HCT116 (cell line): ENCODE measurements at regions of chr20 and their contacts with region 1.

Region 1: GRCh38 chr20:33401184-33401920 is at the start of gene CDK5RAP1:
- DNase-seq: peak; percentile 88
- ATAC-seq: peak; percentile 90
- H3K4me3 ChIP-seq: peak within 1 kb of the TSS; percentile 90 to 99
- H3K27ac ChIP-seq: peak within 1 kb of the TSS; percentile 54
- H3K4me1 ChIP-seq: peaks cover 10 to 15% of the 10 kb centered on the region in 2 experiments
- H3K27me3 ChIP-seq: no peaks in the 10 kb centered on the region
- CTCF ChIP-seq: no peak
- POLR2A ChIP-seq: peak; percentile 52
- RAD21 ChIP-seq: no peak
- total RNA-seq, gene CDK5RAP1: 41.4 TPM

Region 2: DNA sequence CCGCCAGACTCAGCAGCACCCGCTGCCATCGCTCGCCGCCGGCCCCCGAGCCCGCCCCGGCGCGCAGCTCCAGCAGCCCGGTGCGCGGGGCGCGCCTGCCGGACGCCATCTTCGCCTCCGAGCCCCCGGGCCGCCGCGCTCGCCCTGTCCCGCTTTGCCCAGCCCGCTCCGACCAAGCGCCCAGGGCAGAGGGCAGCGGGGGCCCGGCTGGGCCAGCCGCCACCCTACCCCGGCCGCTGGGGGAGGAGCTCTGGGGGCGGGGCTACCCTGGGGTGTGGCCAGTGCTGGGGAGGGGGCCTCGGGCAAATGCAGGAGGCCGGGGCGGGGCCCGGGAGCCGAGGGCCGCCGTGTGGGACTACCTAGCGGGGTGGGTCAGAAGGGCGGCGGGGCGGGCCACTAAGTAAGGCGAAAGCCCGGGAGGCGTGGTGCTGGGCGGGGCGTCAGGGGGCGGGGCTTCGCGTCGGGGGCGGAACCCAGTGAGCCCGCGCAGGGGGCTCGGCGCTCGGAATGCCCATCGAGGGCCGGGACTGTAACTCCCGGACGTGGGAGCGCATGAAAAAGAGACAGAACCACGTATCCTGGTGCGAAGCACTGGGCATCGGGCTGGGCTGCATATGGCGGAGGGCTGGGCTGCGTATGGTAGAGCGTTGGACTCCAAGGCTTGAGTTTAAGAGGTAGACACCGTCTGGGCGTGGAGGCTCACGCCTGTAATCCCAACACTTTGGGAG is 42.3 kb after region 1 on chr20 and contains the start of gene SNTA1:
- CTCF ChIA-PET with region 1: interaction called, 5 read pairs
- POLR2A ChIA-PET with region 1: interaction called, 5 read pairs
- RAD21 ChIA-PET with region 1: interaction called in 1 of 2 experiments, 3 read pairs
- intact Hi-C with region 1: loop called (anchors 2 kb)
- DNase-seq: no peak
- ATAC-seq: peak; percentile 91
- H3K4me3 ChIP-seq: peak within 1 kb of the TSS; percentile 57 to 69
- H3K27ac ChIP-seq: peak within 1 kb of the TSS; percentile 63; the same call in 1 of the 2 replicates
- H3K4me1 ChIP-seq: peaks cover 12 to 22% of the 10 kb centered on the region in 2 experiments
- H3K27me3 ChIP-seq: no peaks in the 10 kb centered on the region
- CTCF ChIP-seq: no peak
- POLR2A ChIP-seq: no peak
- RAD21 ChIP-seq: no peak
- total RNA-seq, gene SNTA1: 14.6 TPM

Region 3: DNA sequence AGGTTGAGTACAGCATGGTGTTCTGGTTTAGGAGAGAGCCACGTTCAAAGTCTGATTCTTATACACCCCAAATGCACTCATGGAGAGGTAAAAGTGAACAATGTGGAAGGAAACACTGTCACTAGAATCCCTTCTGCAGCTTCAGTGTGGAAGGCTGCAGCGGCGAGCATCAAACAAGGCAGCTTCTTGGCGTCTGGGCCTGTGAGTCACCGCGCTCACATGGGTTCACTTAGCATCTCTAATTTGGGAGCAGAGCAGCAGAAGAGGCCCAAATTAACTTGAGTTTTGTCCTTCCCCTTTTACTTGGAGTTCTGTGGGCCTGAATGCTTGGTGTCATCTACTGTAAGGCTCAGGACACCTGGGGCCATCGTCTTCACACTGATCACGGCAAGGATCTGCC is 295.8 kb after region 1 on chr20:
- CTCF ChIA-PET with region 1: no interaction called
- POLR2A ChIA-PET with region 1: no interaction called
- RAD21 ChIA-PET with region 1: no interaction called
- intact Hi-C with region 1: no loop called
- DNase-seq: no peak
- ATAC-seq: no peak
- H3K4me3 ChIP-seq: no peak overlapping the region
- H3K27ac ChIP-seq: no peak overlapping the region
- H3K4me1 ChIP-seq: no peaks in the 10 kb centered on the region
- H3K27me3 ChIP-seq: no peaks in the 10 kb centered on the region
- CTCF ChIP-seq: no peak
- POLR2A ChIP-seq: no peak
- RAD21 ChIP-seq: no peak